Activated naive CD4-positive, alpha-beta T cell treated with anti-CD3 and anti-CD28 coated beads, Interleukin-2, amount 10 ng/mL, durations not matched to agents 7 days and 5 days (primary cell): ENCODE measurements at regions of chr1 and their contacts with region 1.

Region 1: GRCh38 chr1:6646499-6647148 is 22.0 kb downstream of the THAP3 start:
- DNase-seq: peak; percentile 55
- H3K4me3 Mint-ChIP-seq: no peak overlapping the region
- H3K27ac Mint-ChIP-seq: no peak overlapping the region
- H3K4me1 Mint-ChIP-seq: peaks cover 4% of the 10 kb centered on the region
- H3K27me3 Mint-ChIP-seq: no peaks in the 10 kb centered on the region

Region 2: DNA sequence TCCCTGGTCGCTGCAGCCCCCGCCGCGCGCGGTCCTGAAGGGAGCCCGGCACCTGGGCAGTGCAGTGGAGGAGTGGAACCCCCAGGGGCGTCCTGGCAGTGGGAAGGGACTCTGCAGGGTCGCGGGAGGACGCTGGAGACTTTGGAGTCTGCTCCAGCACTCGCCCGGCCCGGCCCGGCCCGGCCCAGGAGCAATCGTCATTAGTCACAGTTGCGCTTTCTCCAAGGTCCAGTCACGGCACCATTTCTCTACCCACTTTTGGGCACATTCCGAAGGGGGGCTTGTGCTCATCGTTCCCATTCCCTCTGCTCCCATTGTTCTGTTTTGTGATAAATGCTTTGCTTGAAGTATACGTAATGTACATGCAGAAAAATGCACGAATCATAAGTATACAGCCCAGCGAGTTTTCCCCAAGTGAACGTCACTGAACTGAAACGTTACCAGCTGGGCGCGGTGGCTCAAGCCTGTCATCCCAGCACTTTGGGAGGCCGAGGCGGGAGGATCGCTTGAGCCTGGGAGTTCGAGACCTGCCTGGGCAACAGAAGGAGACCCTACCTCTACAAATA is 21.0 kb before region 1 on chr1:
- CTCF ChIA-PET with region 1: interaction called, 12 read pairs
- DNase-seq: peak; percentile 30
- H3K4me3 Mint-ChIP-seq: peak overlapping the region; percentile 94
- H3K27ac Mint-ChIP-seq: peak overlapping the region; percentile 90
- H3K4me1 Mint-ChIP-seq: peaks cover 33% of the 10 kb centered on the region
- H3K27me3 Mint-ChIP-seq: no peaks in the 10 kb centered on the region

Region 3: DNA sequence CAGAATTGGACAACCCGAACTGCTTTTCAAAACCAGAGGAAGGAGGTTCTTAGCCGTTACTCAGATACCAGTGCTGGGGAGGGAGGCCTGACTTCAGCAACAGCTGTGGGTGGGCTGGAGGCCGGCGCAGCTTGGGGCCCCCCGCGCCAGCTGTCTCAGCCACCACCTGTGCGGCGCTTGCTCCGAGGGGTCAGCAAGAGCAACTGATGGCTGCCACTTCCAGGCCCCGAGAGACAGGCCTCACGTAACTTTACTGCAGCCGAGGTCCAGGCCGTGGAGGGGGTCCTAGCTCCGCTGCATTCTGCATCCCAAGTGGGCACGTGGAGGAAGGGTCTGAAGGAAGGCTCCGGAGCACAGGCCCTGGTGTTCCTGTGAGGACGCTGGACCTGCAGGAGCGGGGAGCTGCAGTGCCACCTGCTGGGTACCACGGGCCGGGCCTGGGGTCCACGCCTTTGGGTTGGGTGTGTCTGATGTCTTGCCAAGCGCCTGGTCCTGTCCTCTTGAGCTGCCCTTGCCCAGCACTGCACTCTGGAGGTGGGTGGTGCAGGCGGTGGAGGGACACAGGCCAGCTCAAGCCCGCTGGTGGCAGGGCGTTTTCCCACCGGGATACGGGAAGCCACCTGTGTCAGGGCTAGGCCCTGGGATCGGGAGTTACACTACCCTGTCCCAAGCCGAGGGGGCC is 12.1 kb before region 1 on chr1:
- CTCF ChIA-PET with region 1: interaction called, 10 read pairs
- DNase-seq: peak; percentile 64
- H3K4me3 Mint-ChIP-seq: no peak overlapping the region
- H3K27ac Mint-ChIP-seq: peak overlapping the region; percentile 8
- H3K4me1 Mint-ChIP-seq: peaks cover under 1% of the 10 kb centered on the region
- H3K27me3 Mint-ChIP-seq: no peaks in the 10 kb centered on the region